ENCODE measurements at regions of chr1 and their contacts with region 1.

Region 1: DNA sequence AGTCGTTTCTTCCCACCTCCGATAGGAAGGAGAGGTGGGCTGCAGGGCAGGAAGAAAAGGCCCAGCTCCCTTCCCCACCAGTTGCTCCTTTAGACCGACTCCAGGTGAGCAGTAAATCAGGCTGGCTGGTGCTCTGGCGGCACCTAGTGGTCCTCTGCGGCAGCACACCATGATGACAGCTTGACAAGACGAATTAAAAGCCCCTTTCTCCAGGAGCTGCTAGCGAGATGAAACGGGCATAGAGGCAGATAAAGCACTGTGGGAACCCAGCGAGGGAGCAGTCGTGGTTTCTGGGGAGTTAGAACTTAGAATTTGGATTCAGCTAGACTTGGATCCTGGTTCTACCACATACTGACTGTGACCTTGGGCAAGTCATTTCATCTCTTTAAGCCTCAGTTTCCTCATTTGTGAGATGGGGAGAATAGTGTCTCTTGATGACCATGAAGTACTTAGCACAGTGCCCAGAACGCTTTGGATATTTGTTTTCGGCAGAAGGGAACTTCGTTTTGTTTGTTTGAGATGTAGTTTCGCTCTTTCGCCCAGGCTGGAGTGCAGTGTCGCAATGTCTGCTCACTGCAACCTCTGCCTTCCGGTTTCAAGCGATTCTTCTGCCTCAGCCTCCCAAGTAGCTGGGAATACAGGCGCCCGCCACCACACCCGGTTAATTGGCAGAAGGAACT is 21.8 kb upstream of the COL9A2 start:
- DNase-seq: peak; percentile 92
- ATAC-seq: peak; percentile 98
- H3K4me3 ChIP-seq: peak overlapping the region in 3 of 5 experiments; percentile 3 to 46 (median 6)
- H3K4me3 Mint-ChIP-seq: peak overlapping the region; percentile 38
- H3K27ac ChIP-seq: no peak overlapping the region
- H3K27ac Mint-ChIP-seq: peak overlapping the region; percentile 28
- H3K4me1 ChIP-seq: peaks cover 25 to 34% of the 10 kb centered on the region in 2 donors
- H3K4me1 Mint-ChIP-seq: peaks cover 39% of the 10 kb centered on the region
- H3K27me3 ChIP-seq: no peaks in the 10 kb centered on the region
- H3K27me3 Mint-ChIP-seq: no peaks in the 10 kb centered on the region
- CTCF ChIP-seq: peak; percentile 98

Region 2: DNA sequence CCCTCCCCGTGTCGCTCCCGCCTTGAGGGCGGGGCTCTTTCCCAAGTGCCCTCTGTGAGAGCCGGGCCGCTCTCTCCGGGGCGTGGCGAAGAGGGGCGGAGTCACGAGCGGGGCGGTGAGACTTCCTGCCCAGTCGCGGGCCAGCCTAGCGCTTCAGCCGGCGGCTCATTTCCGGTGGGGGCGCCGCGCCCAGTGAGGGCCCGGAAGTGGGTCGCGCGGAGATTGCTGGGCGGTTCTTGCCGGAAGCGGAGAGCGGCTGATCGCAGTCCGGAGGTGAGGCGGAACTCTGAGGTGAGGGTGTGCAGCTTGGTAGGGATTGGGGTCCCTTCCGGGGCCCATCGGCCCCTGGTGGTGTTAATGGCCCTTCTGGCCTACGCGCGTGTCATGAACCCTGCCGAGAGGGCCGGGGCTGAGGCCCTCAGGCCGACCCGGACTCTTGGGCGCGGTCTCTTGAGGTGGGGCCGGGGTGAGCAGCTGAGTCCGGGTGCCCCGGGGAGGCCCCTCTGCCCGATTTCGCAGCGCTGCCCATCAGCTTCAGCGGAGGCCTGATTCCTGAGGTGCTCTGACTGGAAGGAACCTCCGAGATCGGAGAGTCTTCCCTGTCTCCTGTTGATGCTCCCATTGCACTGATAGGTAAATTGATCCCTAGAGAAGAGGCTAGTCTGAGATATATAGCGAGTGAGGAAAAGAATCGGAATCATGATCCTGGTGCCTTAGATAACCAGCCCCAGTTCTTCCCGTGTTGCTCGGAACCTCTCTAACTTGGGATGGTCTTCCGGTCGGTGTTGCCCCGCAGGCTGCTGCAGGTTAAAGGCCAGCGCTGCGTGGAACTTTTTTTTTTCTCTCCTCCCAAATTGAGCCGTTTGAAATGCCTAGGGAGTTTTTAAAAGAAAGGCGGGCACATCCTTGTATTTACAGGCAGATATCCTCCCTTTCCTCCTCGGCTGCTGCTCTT is 298.1 kb before region 1 on chr1 and contains the start of gene CAP1:
- CTCF ChIA-PET with region 1: interaction called, 11 read pairs
- POLR2A ChIA-PET with region 1: no interaction called
- intact Hi-C with region 1: no loop called
- DNase-seq: peak; percentile 100
- ATAC-seq: peak; percentile 86
- H3K4me3 ChIP-seq: peak within 1 kb of the TSS; percentile 88 to 100 (median 97)
- H3K4me3 Mint-ChIP-seq: peak within 1 kb of the TSS; percentile 99
- H3K27ac ChIP-seq: peak within 1 kb of the TSS; percentile 91 to 98
- H3K27ac Mint-ChIP-seq: peak within 1 kb of the TSS; percentile 100
- H3K4me1 ChIP-seq: peaks cover 70 to 83% of the 10 kb centered on the region in 2 donors
- H3K4me1 Mint-ChIP-seq: peaks cover 71% of the 10 kb centered on the region
- H3K27me3 ChIP-seq: no peaks in the 10 kb centered on the region
- H3K27me3 Mint-ChIP-seq: no peaks in the 10 kb centered on the region
- CTCF ChIP-seq: no peak
- total RNA-seq, gene CAP1: 195 and 203 TPM in 2 replicates

Region 3: GRCh38 chr1:40143891-40144575 is 194.9 kb before region 1 on chr1:
- CTCF ChIA-PET with region 1: interaction called, 252 read pairs
- POLR2A ChIA-PET with region 1: interaction called, 8 read pairs
- intact Hi-C with region 1: loop called (anchors 1 kb)
- DNase-seq: peak; percentile 84
- ATAC-seq: peak; percentile 60
- H3K4me3 ChIP-seq: no peak overlapping the region
- H3K4me3 Mint-ChIP-seq: no peak overlapping the region
- H3K27ac ChIP-seq: no peak overlapping the region
- H3K27ac Mint-ChIP-seq: no peak overlapping the region
- H3K4me1 ChIP-seq: peaks cover 3 to 6% of the 10 kb centered on the region in 2 donors
- H3K4me1 Mint-ChIP-seq: peaks cover 7% of the 10 kb centered on the region
- H3K27me3 ChIP-seq: peaks cover 0 to 8% (median 0%) of the 10 kb centered on the region in 4 experiments
- H3K27me3 Mint-ChIP-seq: peaks cover 24% of the 10 kb centered on the region
- CTCF ChIP-seq: peak; percentile 85

Region 4: DNA sequence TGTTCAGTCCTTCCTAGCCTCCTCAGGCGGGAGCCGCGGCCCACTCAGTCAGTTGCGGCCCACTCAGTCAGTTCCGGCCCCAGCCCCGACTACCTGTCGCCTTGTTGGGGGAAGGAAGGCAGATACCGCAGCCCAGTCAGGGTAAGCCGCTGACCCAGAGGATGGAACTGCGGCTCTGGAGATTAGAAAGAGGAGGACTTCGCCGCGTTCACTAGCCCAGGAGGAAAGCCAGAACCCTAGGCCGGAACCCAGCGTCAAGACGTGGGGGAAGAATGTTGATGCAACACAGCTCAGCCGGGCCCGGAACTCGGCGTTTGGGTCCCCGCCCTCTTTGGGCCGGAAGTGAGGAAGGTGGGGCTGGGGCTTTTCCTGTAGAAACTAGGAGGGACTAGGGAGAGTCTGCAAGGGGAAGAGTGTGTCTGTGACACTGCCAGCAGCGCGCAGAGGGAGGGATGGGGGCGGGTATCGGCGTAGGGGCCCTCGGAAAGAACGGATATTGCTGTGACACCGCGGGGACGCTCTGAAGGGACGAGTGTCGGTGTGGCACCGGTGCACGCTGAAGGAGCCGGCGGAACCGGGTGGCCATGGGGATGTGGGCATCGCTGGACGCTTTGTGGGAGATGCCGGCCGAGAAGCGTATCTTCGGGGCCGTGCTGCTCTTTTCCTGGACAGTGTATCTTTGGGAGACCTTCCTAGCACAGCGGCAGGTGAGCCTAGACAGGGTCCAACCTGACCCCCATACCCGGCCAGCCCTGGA is 81.0 kb before region 1 on chr1 and contains the start of gene ZMPSTE24:
- CTCF ChIA-PET with region 1: interaction called, 4 read pairs
- POLR2A ChIA-PET with region 1: no interaction called
- intact Hi-C with region 1: loop called (anchors 5 kb)
- DNase-seq: peak; percentile 98
- ATAC-seq: peak; percentile 94
- H3K4me3 ChIP-seq: peak within 1 kb of the TSS; percentile 80 to 98 (median 96)
- H3K4me3 Mint-ChIP-seq: peak within 1 kb of the TSS; percentile 97
- H3K27ac ChIP-seq: peak within 1 kb of the TSS; percentile 99
- H3K27ac Mint-ChIP-seq: peak within 1 kb of the TSS; percentile 99
- H3K4me1 ChIP-seq: peaks cover 9 to 10% of the 10 kb centered on the region in 2 donors
- H3K4me1 Mint-ChIP-seq: peaks cover 32% of the 10 kb centered on the region
- H3K27me3 ChIP-seq: no peaks in the 10 kb centered on the region
- H3K27me3 Mint-ChIP-seq: no peaks in the 10 kb centered on the region
- CTCF ChIP-seq: no peak
- total RNA-seq, gene ZMPSTE24: 14.0 and 18.5 TPM in 2 replicates

Region 5: DNA sequence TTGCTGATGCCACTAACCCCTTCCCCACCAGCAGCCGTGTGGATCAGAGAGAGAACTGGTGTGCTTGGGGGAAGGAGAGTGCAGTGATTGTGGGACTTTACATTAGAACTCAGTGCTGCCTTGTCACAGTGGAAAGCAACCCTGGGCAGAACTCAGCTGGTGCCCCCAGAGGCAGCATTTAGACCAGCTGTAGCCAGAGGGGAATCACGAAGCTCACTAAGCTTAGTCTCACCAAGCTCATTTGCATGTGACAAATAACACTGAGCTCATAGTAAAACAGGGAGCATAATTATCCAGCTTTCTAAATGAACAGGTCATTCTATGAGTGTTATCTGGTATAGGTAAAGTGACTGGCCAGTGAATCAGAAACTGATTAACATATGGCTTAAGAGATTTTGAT is 24.8 kb after region 1 on chr1:
- CTCF ChIA-PET with region 1: interaction called, 21 read pairs
- POLR2A ChIA-PET with region 1: interaction called, 4 read pairs
- intact Hi-C with region 1: no loop called
- DNase-seq: peak; percentile 78
- ATAC-seq: peak; percentile 100
- H3K4me3 ChIP-seq: no peak overlapping the region
- H3K4me3 Mint-ChIP-seq: peak overlapping the region; percentile 27
- H3K27ac ChIP-seq: peak overlapping the region in 1 of 2 donors; percentile 18
- H3K27ac Mint-ChIP-seq: peak overlapping the region; percentile 74
- H3K4me1 ChIP-seq: peaks cover 12 to 13% of the 10 kb centered on the region in 2 donors
- H3K4me1 Mint-ChIP-seq: peaks cover 13% of the 10 kb centered on the region
- H3K27me3 ChIP-seq: no peaks in the 10 kb centered on the region
- H3K27me3 Mint-ChIP-seq: no peaks in the 10 kb centered on the region
- CTCF ChIP-seq: peak; percentile 54

Region 6: DNA sequence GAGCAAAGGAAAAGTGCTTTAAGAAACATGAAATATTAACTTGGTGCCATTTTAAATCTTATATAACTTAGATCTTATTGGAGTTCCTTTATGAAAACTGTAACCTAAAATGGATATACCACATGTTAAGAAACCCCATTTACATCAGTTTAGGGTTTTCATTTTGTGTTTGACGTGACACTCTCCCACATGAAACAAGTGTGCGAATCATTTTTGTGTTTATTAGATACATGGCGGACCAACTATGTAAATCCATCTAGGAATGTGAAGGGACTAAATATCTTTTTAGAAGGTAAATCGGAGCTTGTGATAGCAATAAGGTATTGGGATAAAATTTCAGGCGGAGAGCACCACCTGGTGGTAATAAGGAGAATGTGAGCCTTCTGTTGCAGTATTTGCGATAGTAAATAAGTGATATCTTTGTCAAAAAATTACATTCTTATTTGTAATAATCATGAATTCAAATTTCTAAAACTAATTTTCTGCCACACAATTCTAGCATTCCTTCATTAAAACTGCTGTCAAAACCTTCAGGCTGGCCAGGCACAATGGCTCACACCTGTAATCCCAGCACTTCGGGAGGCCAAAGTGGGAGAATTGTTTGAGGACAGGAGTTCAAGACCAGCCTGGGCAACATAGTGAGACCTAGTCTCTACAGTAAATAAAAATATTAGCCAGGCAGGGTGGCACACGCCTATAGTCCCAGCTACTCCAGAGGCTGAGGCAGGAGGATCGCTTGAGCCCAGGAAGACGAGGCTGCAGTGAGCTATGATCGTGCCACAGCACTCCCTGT is 66.0 kb after region 1 on chr1:
- CTCF ChIA-PET with region 1: interaction called, 304 read pairs
- POLR2A ChIA-PET with region 1: interaction called, 3 read pairs
- intact Hi-C with region 1: loop called (anchors 1 kb)
- DNase-seq: peak; percentile 84
- ATAC-seq: peak; percentile 36
- H3K4me3 ChIP-seq: peak overlapping the region in 1 of 5 experiments; percentile 4
- H3K4me3 Mint-ChIP-seq: peak overlapping the region; percentile 61
- H3K27ac ChIP-seq: peak overlapping the region; percentile 76 to 100
- H3K27ac Mint-ChIP-seq: peak overlapping the region; percentile 92
- H3K4me1 ChIP-seq: peaks cover 54 to 58% of the 10 kb centered on the region in 2 donors
- H3K4me1 Mint-ChIP-seq: peaks cover 62% of the 10 kb centered on the region
- H3K27me3 ChIP-seq: no peaks in the 10 kb centered on the region
- H3K27me3 Mint-ChIP-seq: no peaks in the 10 kb centered on the region
- CTCF ChIP-seq: peak; percentile 88

Region 7: GRCh38 chr1:40668769-40669525 is 330.1 kb after region 1 on chr1:
- CTCF ChIA-PET with region 1: no interaction called
- POLR2A ChIA-PET with region 1: interaction called, 11 read pairs
- intact Hi-C with region 1: no loop called
- DNase-seq: peak; percentile 90
- ATAC-seq: peak; percentile 71
- H3K4me3 ChIP-seq: peak overlapping the region in 4 of 5 experiments; percentile 28 to 69 (median 40)
- H3K4me3 Mint-ChIP-seq: peak overlapping the region; percentile 71
- H3K27ac ChIP-seq: no peak overlapping the region
- H3K27ac Mint-ChIP-seq: peak overlapping the region; percentile 20
- H3K4me1 ChIP-seq: peaks cover 12 to 27% of the 10 kb centered on the region in 2 donors
- H3K4me1 Mint-ChIP-seq: peaks cover 23% of the 10 kb centered on the region
- H3K27me3 ChIP-seq: no peaks in the 10 kb centered on the region
- H3K27me3 Mint-ChIP-seq: peaks cover 5% of the 10 kb centered on the region
- CTCF ChIP-seq: peak; percentile 94

Measured in B cell (primary cell).